Activated CD8-positive, alpha-beta T cell treated with anti-CD3 and anti-CD28 coated beads for 36 hours (primary cell): ENCODE measurements at regions of chr17 and their contacts with region 1.

Region 1: DNA sequence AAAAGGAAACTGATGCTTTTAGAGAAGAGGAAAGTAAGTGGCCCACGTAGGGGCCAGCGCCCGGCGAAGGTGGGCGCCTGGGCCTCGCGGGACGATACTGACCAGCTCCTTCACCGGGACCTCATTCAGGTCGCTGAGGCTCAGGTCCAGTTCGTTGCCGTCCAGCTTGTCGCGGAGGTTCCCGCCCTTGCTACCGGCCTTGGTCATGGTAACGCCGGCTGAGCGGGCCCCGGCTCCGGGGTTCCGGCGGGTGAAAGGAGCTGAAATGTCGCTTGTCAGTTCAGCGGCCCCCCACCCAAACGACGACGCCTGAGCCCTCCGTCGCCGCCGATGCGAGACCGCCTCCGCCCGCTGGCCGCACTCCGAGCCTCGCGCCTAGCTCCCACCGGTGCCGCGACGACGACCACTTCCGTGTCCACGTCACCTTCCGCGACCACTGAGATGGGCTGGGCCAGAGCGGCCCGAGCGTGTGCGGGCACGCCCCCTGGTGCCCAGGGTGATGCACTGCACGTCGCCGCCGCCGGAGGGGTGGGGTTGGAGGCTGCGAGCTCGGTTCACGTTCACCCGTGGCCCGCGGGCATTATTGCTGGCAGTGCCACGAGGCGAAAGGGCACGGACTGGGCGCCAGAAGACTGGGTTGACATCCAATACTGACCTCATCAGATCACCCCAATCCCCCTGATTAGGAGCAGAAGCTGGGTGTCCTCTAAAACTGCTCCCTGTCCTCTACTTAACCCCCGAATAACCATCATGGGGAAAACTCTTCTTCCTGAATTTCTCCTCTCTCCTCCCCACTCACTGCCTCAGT is at the start of gene LRRC59:
- DNase-seq: peak; percentile 93
- ATAC-seq: peak; percentile 100
- H3K4me3 Mint-ChIP-seq: peak within 1 kb of the TSS; percentile 89
- H3K27ac Mint-ChIP-seq: peak within 1 kb of the TSS; percentile 90
- H3K4me1 Mint-ChIP-seq: peaks cover 30% of the 10 kb centered on the region
- H3K27me3 Mint-ChIP-seq: no peaks in the 10 kb centered on the region
- CTCF ChIP-seq: peak; percentile 97
- total RNA-seq, gene LRRC59: 70.6 to 71.0 TPM

Region 2: GRCh38 chr17:50361561-50362480 is 35.5 kb before region 1 on chr17:
- CTCF ChIA-PET with region 1: interaction called, 74 read pairs
- POLR2A ChIA-PET with region 1: interaction called, 7 read pairs
- intact Hi-C with region 1: no loop called
- DNase-seq: peak; percentile 73
- ATAC-seq: peak; percentile 87
- H3K4me3 Mint-ChIP-seq: no peak overlapping the region
- H3K27ac Mint-ChIP-seq: peak overlapping the region; percentile 79
- H3K4me1 Mint-ChIP-seq: peaks cover 16% of the 10 kb centered on the region
- H3K27me3 Mint-ChIP-seq: no peaks in the 10 kb centered on the region
- CTCF ChIP-seq: peak; percentile 85

Region 3: DNA sequence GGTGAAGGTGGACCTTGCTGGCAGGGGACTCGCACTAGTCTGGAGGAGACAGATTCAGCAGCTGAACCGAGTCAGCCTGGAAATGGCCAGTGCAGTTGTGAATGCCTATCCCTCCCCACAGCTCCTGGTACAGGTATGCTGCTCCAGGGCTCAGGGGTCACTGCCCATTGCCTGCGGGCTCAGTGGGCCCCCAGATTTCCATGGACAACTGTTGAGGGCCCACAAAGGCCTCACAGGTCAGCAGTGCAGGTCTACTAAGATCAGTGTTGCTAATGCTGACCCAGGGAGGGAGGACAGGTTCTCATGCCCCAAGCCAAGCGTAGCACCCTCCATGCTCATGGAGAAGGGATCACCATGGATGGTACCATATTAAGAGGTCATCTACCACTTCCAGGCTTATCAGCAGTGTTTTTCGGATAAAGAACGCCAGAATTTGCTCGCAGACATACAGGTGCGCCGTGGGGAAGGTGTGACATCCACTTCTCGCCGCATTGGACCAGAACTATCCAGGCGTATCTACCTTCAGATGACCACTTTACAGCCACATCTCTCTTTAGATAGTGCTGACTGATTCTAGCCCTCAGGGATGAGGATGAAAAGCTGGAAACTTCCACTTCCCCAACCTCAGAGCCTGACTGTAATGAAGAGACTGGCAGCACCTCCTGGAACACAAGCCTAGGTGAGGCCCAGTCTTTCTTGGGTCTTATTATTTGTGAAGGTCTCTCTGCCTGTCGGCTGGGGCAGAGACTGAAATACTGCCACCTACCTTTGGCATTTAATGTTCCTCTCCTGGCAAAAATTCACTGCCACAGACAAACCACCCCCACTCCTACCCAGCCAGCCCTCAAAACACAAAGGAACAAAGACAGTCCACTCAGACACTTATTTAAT is 16.7 kb before region 1 on chr17:
- CTCF ChIA-PET with region 1: interaction called, 22 read pairs
- POLR2A ChIA-PET with region 1: interaction called, 22 read pairs
- intact Hi-C with region 1: no loop called
- DNase-seq: no peak
- ATAC-seq: no peak
- H3K4me3 Mint-ChIP-seq: no peak overlapping the region
- H3K27ac Mint-ChIP-seq: no peak overlapping the region
- H3K4me1 Mint-ChIP-seq: no peaks in the 10 kb centered on the region
- H3K27me3 Mint-ChIP-seq: no peaks in the 10 kb centered on the region
- CTCF ChIP-seq: no peak

Region 4: DNA sequence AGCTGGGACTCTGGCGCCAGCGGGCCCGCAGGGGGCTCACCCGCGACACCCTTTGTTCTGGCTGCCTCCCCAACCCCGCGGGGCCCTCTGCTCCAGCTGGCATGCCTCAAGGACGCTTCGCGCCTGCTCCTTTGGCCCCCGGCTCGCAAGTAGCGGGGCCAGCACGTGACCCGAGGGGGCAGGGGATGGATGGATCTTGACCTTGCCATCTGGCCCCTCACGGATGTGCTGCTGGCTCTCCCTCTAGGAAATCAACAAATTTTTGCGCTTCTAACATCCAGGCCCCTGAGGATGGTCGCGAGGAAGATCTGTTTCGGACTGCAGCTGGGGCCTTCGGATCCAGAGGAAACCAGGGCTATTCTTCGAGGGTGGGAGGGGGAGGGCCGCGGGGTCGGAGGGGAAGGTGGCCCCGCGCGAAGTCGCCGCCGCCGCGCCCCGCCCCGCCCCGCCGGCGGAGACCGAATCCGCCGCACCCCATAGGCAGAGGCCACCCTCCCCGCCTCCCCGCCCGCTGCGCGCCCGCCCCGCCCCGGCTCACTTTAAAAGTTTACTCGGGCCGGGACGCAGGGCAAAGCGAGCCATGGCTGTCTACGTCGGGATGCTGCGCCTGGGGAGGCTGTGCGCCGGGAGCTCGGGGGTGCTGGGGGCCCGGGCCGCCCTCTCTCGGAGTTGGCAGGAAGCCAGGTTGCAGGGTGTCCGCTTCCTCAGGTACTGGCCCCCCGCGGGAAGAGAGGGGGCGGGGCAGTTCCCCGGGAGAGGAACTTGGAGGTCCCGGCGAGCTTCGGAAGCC is 28.6 kb after region 1 on chr17 and contains the start of gene ACSF2:
- CTCF ChIA-PET with region 1: interaction called, 31 read pairs
- POLR2A ChIA-PET with region 1: interaction called, 7 read pairs
- intact Hi-C with region 1: no loop called
- DNase-seq: peak; percentile 79
- ATAC-seq: peak; percentile 85
- H3K4me3 Mint-ChIP-seq: peak within 1 kb of the TSS; percentile 80
- H3K27ac Mint-ChIP-seq: peak within 1 kb of the TSS; percentile 77
- H3K4me1 Mint-ChIP-seq: peaks cover 34% of the 10 kb centered on the region
- H3K27me3 Mint-ChIP-seq: no peaks in the 10 kb centered on the region
- CTCF ChIP-seq: no peak
- total RNA-seq, gene ACSF2: 14.5 to 17.5 TPM

Region 5: GRCh38 chr17:50478391-50479381 is 81.4 kb after region 1 on chr17 and contains the start of gene RSAD1:
- CTCF ChIA-PET with region 1: interaction called, 25 read pairs
- POLR2A ChIA-PET with region 1: interaction called, 15 read pairs
- intact Hi-C with region 1: no loop called
- DNase-seq: peak; percentile 90
- ATAC-seq: peak; percentile 94
- H3K4me3 Mint-ChIP-seq: peak within 1 kb of the TSS; percentile 89
- H3K27ac Mint-ChIP-seq: peak within 1 kb of the TSS; percentile 93
- H3K4me1 Mint-ChIP-seq: peaks cover 22% of the 10 kb centered on the region
- H3K27me3 Mint-ChIP-seq: peaks cover 3% of the 10 kb centered on the region
- CTCF ChIP-seq: peak; percentile 86
- total RNA-seq, gene RSAD1: 39.2 to 40.7 TPM